Sciatic nerve (tissue), 2 donors: ENCODE measurements at regions of chr9 and their contacts with region 1.

Region 1: DNA sequence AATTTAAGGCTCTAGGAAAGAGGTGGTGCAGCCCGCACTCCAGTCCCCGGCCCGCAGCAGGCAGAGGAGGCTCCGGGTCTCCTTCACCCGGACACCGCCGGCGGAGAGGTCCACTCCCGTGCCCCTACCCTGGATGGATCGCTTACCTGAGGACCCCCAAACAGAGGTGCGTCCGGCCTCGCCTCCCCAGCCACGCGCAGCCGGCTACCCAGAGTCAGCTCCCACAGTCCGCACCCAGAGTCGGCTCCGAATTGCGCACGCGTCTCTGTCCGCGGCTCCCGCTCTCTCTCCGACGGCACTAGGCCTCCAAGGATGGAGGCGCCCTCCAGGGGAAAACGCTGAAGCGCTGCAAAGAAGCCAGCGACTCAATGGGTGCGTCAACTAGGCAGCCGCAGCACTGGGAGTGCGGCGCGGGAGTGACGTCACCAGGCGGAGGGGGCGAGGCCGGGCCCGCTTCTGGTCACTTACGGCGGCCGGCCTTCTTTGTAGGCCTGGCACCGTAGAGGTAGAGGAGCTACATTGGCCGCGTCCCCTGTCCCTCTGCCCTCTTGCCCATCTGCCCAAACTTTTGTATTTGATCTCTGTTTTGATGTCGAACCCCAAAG is at the start of gene ELP1:
- DNase-seq: peak; percentile 95
- ATAC-seq: peak; percentile 95
- total RNA-seq, gene ELP1: 21.8 TPM

Region 2: GRCh38 chr9:108991479-108991878 is 57.7 kb after region 1 on chr9:
- intact Hi-C with region 1: loop called (anchors 2 kb)
- DNase-seq: no peak
- ATAC-seq: no peak